PC-3 (cell line): ENCODE measurements at regions of chr1 and their contacts with region 1.

Region 1: DNA sequence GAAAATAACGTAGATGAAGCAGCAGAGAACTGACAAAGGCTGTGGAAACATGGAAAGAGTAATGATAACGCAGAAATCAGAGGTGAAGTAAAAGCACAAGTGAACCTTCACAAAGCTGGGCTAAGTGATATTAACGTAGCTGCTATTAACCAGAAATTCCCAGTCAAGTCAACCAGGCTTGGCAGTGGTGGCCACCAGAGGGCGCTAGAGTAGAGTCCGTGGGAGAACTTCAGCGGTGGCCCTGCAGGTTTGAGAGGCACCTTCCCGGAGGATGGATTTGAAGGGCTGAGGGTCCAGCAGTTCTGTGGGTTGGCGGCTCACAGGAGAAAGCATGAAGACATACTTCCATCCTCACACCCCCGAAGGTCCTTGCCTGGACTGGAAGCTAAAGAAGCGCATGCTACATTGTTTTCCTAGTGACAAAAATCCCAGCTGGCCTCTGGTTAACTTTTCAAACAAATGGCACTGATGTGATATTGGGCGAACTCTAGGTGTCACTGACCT is 81.7 kb upstream of the ZNF648 start:
- DNase-seq: peak; percentile 91
- ATAC-seq: peak; percentile 77
- H3K4me3 ChIP-seq: no peak overlapping the region
- H3K27ac ChIP-seq: peak overlapping the region; percentile 63; the same call in 1 of the 2 replicates
- H3K4me1 ChIP-seq: peaks cover 24% of the 10 kb centered on the region
- H3K27me3 ChIP-seq: no peaks in the 10 kb centered on the region
- CTCF ChIP-seq: peak; percentile 86

Region 2: DNA sequence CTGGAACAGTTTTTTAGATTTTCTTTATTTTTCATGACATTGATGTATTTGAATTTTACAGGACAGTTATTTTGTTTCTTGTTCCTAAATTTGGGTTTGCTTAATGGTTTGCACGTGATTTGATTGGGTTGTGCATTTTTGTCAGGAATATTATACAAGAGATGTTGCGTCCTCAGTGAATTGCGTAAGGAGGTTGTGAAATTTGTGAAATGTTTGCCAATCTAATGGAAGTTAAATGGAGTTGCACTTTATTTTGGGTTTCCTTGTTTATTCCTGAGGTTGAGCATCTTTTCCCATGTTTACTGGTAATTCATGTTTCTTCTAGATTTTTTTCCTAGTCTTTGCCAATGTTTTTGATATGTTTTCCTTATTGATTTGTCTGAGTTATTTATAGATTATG is 101.6 kb before region 1 on chr1:
- CTCF ChIA-PET with region 1: no interaction called
- POLR2A ChIA-PET with region 1: no interaction called
- intact Hi-C with region 1: no loop called
- DNase-seq: no peak
- ATAC-seq: no peak
- H3K4me3 ChIP-seq: no peak overlapping the region
- H3K27ac ChIP-seq: no peak overlapping the region
- H3K4me1 ChIP-seq: no peaks in the 10 kb centered on the region
- H3K27me3 ChIP-seq: no peaks in the 10 kb centered on the region
- CTCF ChIP-seq: no peak

Region 3: GRCh38 chr1:182185813-182186756 is 42.9 kb after region 1 on chr1:
- CTCF ChIA-PET with region 1: no interaction called
- POLR2A ChIA-PET with region 1: no interaction called
- intact Hi-C with region 1: loop called (anchors 5 kb)
- DNase-seq: peak; percentile 92
- ATAC-seq: peak; percentile 87
- H3K4me3 ChIP-seq: peak overlapping the region; percentile 23; the same call in 1 of the 2 replicates
- H3K27ac ChIP-seq: peak overlapping the region; percentile 82
- H3K4me1 ChIP-seq: peaks cover 35% of the 10 kb centered on the region
- H3K27me3 ChIP-seq: no peaks in the 10 kb centered on the region
- CTCF ChIP-seq: no peak

Region 4: DNA sequence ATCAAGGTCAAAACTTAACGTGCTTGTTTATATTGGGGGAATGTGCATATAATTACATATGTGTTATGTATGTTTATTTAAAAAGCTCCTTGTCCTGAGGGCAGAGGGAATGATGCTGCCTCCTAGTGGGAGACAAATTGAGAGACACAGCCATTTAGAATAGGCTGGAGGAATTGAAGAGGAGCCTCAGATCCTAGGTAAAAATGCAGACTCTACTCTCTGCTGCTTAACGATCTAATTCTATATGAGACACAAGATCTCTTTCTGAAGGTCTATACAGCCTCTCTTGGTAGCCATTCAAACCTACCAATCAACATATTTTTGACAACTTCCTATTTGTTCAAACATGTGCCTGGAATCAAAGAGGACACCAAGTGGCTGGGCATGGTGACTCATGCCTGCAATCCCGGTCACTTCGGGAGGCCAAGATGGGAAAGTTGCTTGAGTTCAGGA is 54.9 kb after region 1 on chr1:
- CTCF ChIA-PET with region 1: interaction called, 6 read pairs
- POLR2A ChIA-PET with region 1: no interaction called
- intact Hi-C with region 1: loop called (anchors 1 kb)
- DNase-seq: peak; percentile 21
- ATAC-seq: no peak
- H3K4me3 ChIP-seq: no peak overlapping the region
- H3K27ac ChIP-seq: no peak overlapping the region
- H3K4me1 ChIP-seq: no peaks in the 10 kb centered on the region
- H3K27me3 ChIP-seq: no peaks in the 10 kb centered on the region
- CTCF ChIP-seq: peak; percentile 59

Region 5: GRCh38 chr1:182215764-182216163 is 72.6 kb after region 1 on chr1:
- CTCF ChIA-PET with region 1: no interaction called
- POLR2A ChIA-PET with region 1: no interaction called
- intact Hi-C with region 1: loop called (anchors 1 kb)
- DNase-seq: peak; percentile 70
- ATAC-seq: peak; percentile 56
- H3K4me3 ChIP-seq: no peak overlapping the region
- H3K27ac ChIP-seq: peak overlapping the region; percentile 89
- H3K4me1 ChIP-seq: peaks cover 27% of the 10 kb centered on the region
- H3K27me3 ChIP-seq: no peaks in the 10 kb centered on the region
- CTCF ChIP-seq: no peak

Region 6: DNA sequence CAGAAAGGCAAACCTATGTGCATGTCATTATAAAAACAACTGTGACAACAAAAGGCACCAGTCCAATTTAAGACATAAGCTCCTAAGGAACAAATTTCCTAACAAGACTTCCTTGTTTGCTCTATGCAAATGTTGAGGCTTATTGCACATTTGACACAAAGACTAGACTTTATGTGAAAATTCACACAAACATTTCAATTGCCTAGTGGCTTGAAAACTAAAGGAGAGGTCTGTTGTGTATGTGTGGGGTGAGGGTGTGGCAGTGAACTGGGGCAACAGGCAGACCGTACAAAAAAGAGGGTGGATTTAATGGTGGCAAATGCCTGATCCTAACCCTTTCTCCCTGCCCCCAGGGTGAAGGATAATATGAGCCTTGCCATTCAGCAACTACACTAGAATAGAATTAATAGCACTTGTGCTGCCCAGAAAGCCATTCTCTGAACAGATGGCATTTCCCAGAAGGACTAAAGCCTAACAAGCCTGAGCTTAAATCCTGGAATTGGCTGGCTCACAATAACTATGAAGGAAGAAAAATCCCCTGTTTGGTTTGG is 174.5 kb after region 1 on chr1:
- CTCF ChIA-PET with region 1: interaction called, 4 read pairs
- POLR2A ChIA-PET with region 1: no interaction called
- intact Hi-C with region 1: loop called (anchors 2 kb)
- DNase-seq: no peak
- ATAC-seq: no peak
- H3K4me3 ChIP-seq: no peak overlapping the region
- H3K27ac ChIP-seq: no peak overlapping the region
- H3K4me1 ChIP-seq: no peaks in the 10 kb centered on the region
- H3K27me3 ChIP-seq: no peaks in the 10 kb centered on the region
- CTCF ChIP-seq: no peak

Region 7: GRCh38 chr1:182391362-182392044 is 248.3 kb after region 1 on chr1 and contains the start of gene GLUL:
- CTCF ChIA-PET with region 1: interaction called, 15 read pairs
- POLR2A ChIA-PET with region 1: interaction called, 4 read pairs
- intact Hi-C with region 1: loop called (anchors 1 kb)
- DNase-seq: peak; percentile 88
- ATAC-seq: peak; percentile 88
- H3K4me3 ChIP-seq: peak within 1 kb of the TSS; percentile 95
- H3K27ac ChIP-seq: peak within 1 kb of the TSS; percentile 73
- H3K4me1 ChIP-seq: peaks cover 12% of the 10 kb centered on the region
- H3K27me3 ChIP-seq: no peaks in the 10 kb centered on the region
- CTCF ChIP-seq: no peak
- total RNA-seq, gene GLUL: 131 and 159 TPM in 2 replicates

Region 8: DNA sequence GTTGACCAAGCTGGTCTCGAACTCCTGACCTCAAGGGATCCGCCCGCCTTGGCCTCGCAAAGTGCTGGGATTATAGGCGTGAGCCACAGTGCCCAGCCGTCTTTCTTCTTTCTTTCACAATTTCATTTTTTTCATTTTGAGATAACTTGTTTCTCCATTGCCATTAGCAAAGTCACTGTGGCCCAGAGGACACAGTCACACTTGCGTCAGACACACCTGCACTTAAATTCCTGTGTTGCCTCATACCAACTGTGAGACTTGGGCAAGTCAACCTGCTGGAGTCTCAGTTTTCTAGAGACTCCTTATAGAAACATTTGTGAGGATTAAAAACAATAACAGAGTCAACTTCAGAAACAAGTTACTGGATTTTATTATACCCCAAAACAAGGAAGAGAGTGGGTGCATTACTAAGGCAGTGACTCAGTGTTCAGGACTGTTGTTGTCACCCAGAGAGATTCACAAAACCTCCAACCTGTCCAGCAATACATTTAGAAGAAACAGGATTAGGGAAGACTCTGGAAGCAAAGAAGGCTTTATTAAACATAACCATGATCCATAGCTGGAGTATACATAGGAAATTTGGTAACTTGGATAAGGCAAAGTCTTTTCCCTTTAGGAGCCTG is 254.7 kb after region 1 on chr1:
- CTCF ChIA-PET with region 1: interaction called, 15 read pairs
- POLR2A ChIA-PET with region 1: no interaction called
- intact Hi-C with region 1: loop called (anchors 1 kb)
- DNase-seq: peak; percentile 51
- ATAC-seq: peak; percentile 29; the same call in 1 of the 2 replicates
- H3K4me3 ChIP-seq: no peak overlapping the region
- H3K27ac ChIP-seq: peak overlapping the region; percentile 34
- H3K4me1 ChIP-seq: peaks cover 17% of the 10 kb centered on the region
- H3K27me3 ChIP-seq: no peaks in the 10 kb centered on the region
- CTCF ChIP-seq: no peak